ENCODE measurements at regions of chr3 and their contacts with region 1.

Region 1: GRCh38 chr3:64957408-64958198 is 269.8 kb upstream of the ADAMTS9 start:
- DNase-seq: no peak
- H3K4me3 ChIP-seq: no peak overlapping the region
- H3K27ac ChIP-seq: peak overlapping the region; percentile 0 to 65
- H3K4me1 ChIP-seq: no peaks in the 10 kb centered on the region
- H3K27me3 ChIP-seq: no peaks in the 10 kb centered on the region
- CTCF ChIP-seq: no peak
- POLR2A ChIP-seq: no peak

Region 2: DNA sequence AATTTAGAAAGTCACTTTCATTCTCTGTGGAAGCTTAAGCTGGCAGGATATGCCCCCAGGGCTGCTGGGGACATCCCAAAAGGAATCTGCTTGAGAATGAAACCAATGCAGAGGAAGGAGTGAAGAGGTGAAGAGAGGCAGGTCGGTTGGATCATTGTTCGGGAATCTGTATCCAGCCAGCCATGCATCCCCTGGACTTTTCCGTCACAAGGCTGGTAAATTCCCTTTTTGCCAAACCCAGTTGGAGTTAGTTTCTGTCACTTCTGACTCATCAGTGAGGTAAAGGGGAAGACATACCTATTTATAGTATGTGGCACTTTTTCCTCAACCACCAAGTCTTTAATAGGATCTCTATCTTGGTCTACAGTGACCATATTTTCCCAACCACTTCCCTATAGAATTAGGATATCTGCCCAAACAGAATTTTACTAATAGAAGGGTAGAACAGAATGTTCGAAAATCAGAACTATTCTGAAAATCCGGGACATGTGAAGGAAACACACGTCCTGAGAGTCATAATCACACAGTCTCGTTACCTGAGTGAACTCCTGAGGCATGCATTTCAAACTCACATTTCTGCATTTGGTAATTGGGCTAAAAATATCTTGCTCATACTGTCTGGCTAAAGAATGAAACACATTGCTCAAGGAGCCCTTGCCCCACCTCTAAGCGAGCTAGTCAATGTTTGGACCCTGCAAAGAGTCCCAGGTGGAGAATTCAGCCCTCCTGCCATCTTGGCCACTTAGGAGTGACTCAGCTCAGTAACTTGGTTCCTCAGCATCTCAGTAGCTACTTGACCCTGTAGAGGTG is 19.9 kb after region 1 on chr3:
- intact Hi-C with region 1: no loop called
- DNase-seq: no peak
- H3K4me3 ChIP-seq: peak overlapping the region in 1 of 3 donors; percentile 15
- H3K27ac ChIP-seq: peak overlapping the region in 1 of 2 donors; percentile 38
- H3K4me1 ChIP-seq: no peaks in the 10 kb centered on the region
- H3K27me3 ChIP-seq: no peaks in the 10 kb centered on the region
- CTCF ChIP-seq: no peak
- POLR2A ChIP-seq: no peak

Region 3: GRCh38 chr3:64998317-64998716 is 40.7 kb after region 1 on chr3:
- intact Hi-C with region 1: loop called (anchors 1 kb)
- DNase-seq: no peak
- H3K4me3 ChIP-seq: no peak overlapping the region
- H3K27ac ChIP-seq: no peak overlapping the region
- H3K4me1 ChIP-seq: no peaks in the 10 kb centered on the region
- H3K27me3 ChIP-seq: no peaks in the 10 kb centered on the region
- CTCF ChIP-seq: no peak
- POLR2A ChIP-seq: no peak

Region 4: GRCh38 chr3:66456711-66457173 is 1499.1 kb after region 1 on chr3:
- intact Hi-C with region 1: no loop called
- DNase-seq: no peak
- H3K4me3 ChIP-seq: no peak overlapping the region
- H3K27ac ChIP-seq: peak overlapping the region in 1 of 2 donors; percentile 25
- H3K4me1 ChIP-seq: peaks cover 6 to 20% of the 10 kb centered on the region in 2 donors
- H3K27me3 ChIP-seq: no peaks in the 10 kb centered on the region
- CTCF ChIP-seq: no peak
- POLR2A ChIP-seq: no peak